Body of pancreas (tissue), 4 donors: ENCODE measurements at regions of chr9 and their contacts with region 1.

Region 1: GRCh38 chr9:114033397-114034103 is 44.5 kb downstream of the AMBP start:
- DNase-seq: peak in 3 of 4 donors; percentile 5 to 47 (median 24)
- ATAC-seq: no peak
- H3K4me3 ChIP-seq: no peak overlapping the region
- H3K27ac ChIP-seq: no peak overlapping the region
- H3K4me1 ChIP-seq: no peaks in the 10 kb centered on the region
- H3K27me3 ChIP-seq: no peaks in the 10 kb centered on the region
- CTCF ChIP-seq: peak in 5 of 7 experiments; percentile 8 to 50 (median 43)
- POLR2A ChIP-seq: no peak

Region 2: GRCh38 chr9:113817171-113817570 is 216.4 kb before region 1 on chr9:
- intact Hi-C with region 1: loop called (anchors 10 kb)
- DNase-seq: no peak
- ATAC-seq: no peak
- H3K4me3 ChIP-seq: no peak overlapping the region
- H3K27ac ChIP-seq: no peak overlapping the region
- H3K4me1 ChIP-seq: no peaks in the 10 kb centered on the region
- H3K27me3 ChIP-seq: no peaks in the 10 kb centered on the region
- CTCF ChIP-seq: no peak
- POLR2A ChIP-seq: no peak